Endothelial cell of umbilical vein (primary cell): ENCODE measurements at regions of chr1 and their contacts with region 1.

Region 1: GRCh38 chr1:94045465-94046056 is 75.4 kb downstream of the ABCA4 start:
- DNase-seq: peak; percentile 97
- H3K4me3 ChIP-seq: no peak overlapping the region
- H3K27ac ChIP-seq: peak overlapping the region; percentile 89
- H3K4me1 ChIP-seq: peaks cover 65% of the 10 kb centered on the region
- H3K27me3 ChIP-seq: no peaks in the 10 kb centered on the region
- CTCF ChIP-seq: peak; percentile 66 to 89
- POLR2A ChIP-seq: peak; percentile 80

Region 2: GRCh38 chr1:93656491-93656890 is 389.1 kb before region 1 on chr1:
- CTCF ChIA-PET with region 1: no interaction called
- POLR2A ChIA-PET with region 1: no interaction called
- dilution Hi-C with region 1: no loop called
- intact Hi-C with region 1: no loop called
- DNase-seq: no peak
- H3K4me3 ChIP-seq: no peak overlapping the region
- H3K27ac ChIP-seq: no peak overlapping the region
- H3K4me1 ChIP-seq: no peaks in the 10 kb centered on the region
- H3K27me3 ChIP-seq: no peaks in the 10 kb centered on the region
- CTCF ChIP-seq: no peak
- POLR2A ChIP-seq: no peak

Region 3: DNA sequence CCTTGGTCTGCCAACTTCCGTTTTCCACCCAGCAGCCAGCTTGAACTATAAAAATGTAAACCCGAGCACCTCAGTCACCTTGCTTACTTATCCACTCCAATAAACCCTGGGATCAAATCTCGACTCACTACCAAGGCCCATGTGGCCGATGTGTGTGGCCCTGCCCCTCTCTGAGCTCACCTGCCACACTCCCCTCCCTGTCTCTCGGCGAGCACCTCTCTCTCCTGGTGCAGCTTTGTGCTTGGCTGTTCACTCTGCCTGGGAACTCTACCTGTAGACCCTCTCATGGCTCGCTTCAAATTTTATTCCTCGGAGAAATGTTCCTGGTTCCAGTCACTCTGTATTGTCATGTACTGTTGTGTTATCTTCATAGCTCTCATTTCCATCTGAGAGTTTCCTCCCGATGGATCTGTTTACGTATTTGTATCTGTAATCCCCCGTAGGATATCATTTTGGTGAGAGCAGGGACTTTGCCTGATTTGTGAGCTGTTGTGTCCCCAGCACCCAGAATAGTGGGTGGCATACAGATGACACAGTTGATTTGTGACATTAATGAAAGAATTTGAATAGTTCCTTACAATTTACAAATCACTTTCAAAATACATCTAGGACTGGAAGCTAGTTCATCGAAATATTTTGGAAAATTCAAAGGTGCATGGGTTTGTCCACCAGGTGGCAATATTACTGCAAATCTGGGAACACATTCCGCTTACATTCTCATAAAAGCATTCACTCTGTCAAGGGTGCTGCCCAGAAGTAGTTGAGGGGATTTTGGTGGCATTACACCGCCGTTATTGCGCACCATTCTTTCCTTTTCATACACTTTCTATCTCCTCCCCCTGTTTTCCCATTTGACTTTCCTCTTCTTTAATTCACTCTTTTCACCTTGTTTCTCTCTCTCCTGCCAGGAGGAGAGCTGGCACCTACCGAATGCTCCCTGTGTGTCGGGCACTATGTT is 19.9 kb before region 1 on chr1:
- CTCF ChIA-PET with region 1: interaction called, 297 read pairs
- POLR2A ChIA-PET with region 1: interaction called, 3 read pairs
- dilution Hi-C with region 1: no loop called
- intact Hi-C with region 1: loop called (anchors 1 kb)
- DNase-seq: peak; percentile 83
- H3K4me3 ChIP-seq: no peak overlapping the region
- H3K27ac ChIP-seq: no peak overlapping the region
- H3K4me1 ChIP-seq: peaks cover 25% of the 10 kb centered on the region
- H3K27me3 ChIP-seq: no peaks in the 10 kb centered on the region
- CTCF ChIP-seq: peak; percentile 53 to 73
- POLR2A ChIP-seq: no peak

Region 4: GRCh38 chr1:94095112-94095637 is 49.6 kb after region 1 on chr1:
- CTCF ChIA-PET with region 1: interaction called, 6 read pairs
- POLR2A ChIA-PET with region 1: interaction called, 5 read pairs
- dilution Hi-C with region 1: no loop called
- intact Hi-C with region 1: loop called (anchors 1 kb)
- DNase-seq: peak; percentile 97
- H3K4me3 ChIP-seq: no peak overlapping the region
- H3K27ac ChIP-seq: peak overlapping the region; percentile 91
- H3K4me1 ChIP-seq: peaks cover 56% of the 10 kb centered on the region
- H3K27me3 ChIP-seq: no peaks in the 10 kb centered on the region
- CTCF ChIP-seq: no peak
- POLR2A ChIP-seq: peak; percentile 5

Region 5: GRCh38 chr1:94218332-94218731 is 172.8 kb after region 1 on chr1:
- CTCF ChIA-PET with region 1: interaction called, 7 read pairs
- POLR2A ChIA-PET with region 1: interaction called, 3 read pairs
- dilution Hi-C with region 1: no loop called
- intact Hi-C with region 1: loop called (anchors 2 kb)
- DNase-seq: peak; percentile 81
- H3K4me3 ChIP-seq: peak overlapping the region in 1 of 3 experiments; percentile 8
- H3K27ac ChIP-seq: peak overlapping the region; percentile 48
- H3K4me1 ChIP-seq: peaks cover 62% of the 10 kb centered on the region
- H3K27me3 ChIP-seq: no peaks in the 10 kb centered on the region
- CTCF ChIP-seq: no peak
- POLR2A ChIP-seq: no peak

Region 6: GRCh38 chr1:94237291-94238226 is 192.0 kb after region 1 on chr1 and contains the start of gene ARHGAP29:
- CTCF ChIA-PET with region 1: interaction called, 9 read pairs
- POLR2A ChIA-PET with region 1: interaction called, 20 read pairs
- dilution Hi-C with region 1: no loop called
- intact Hi-C with region 1: loop called (anchors 1 kb)
- DNase-seq: peak; percentile 86
- H3K4me3 ChIP-seq: peak within 1 kb of the TSS; percentile 88 to 100 (median 95)
- H3K27ac ChIP-seq: peak within 1 kb of the TSS; percentile 93
- H3K4me1 ChIP-seq: peaks cover 67% of the 10 kb centered on the region
- H3K27me3 ChIP-seq: no peaks in the 10 kb centered on the region
- CTCF ChIP-seq: no peak
- POLR2A ChIP-seq: peak; percentile 83
- total RNA-seq, gene ARHGAP29: 199 and 215 TPM in 2 replicates